ENCODE measurements at regions of chr2 and their contacts with region 1.

Region 1: DNA sequence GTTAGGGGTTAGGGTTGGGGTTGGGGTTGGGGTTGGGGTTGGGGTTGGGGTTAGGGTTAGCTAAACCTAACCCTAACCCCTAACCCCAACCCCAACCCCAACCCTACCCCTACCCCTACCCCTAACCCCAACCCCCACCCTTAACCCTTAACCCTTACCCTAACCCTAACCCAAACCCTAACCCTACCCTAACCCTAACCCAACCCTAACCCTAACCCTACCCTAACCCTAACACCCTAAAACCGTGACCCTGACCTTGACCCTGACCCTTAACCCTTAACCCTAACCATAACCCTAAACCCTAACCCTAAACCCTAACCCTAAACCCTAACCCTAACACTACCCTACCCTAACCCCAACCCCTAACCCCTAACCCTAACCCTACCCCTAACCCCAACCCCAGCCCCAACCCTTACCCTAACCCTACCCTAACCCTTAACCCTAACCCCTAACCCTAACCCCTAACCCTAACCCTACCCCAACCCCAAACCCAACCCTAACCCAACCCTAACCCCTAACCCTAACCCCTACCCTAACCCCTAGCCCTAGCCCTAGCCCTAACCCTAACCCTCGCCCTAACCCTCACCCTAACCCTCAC is 24.1 kb upstream of the RABL2A start:
- DNase-seq: no peak
- H3K4me3 ChIP-seq: peak overlapping the region in 1 of 2 donors; percentile 43
- H3K4me3 Mint-ChIP-seq: peak overlapping the region; percentile 86 to 99 (median 92)
- H3K27ac ChIP-seq: peak overlapping the region; percentile 47
- H3K27ac Mint-ChIP-seq: peak overlapping the region; percentile 84 to 99 (median 95)
- H3K4me1 ChIP-seq: peaks cover 5% of the 10 kb centered on the region
- H3K4me1 Mint-ChIP-seq: peaks cover 4 to 14% (median 8%) of the 10 kb centered on the region in 4 donors
- H3K27me3 ChIP-seq: no peaks in the 10 kb centered on the region
- H3K27me3 Mint-ChIP-seq: peaks cover 0 to 4% of the 10 kb centered on the region in 2 donors

Region 2: DNA sequence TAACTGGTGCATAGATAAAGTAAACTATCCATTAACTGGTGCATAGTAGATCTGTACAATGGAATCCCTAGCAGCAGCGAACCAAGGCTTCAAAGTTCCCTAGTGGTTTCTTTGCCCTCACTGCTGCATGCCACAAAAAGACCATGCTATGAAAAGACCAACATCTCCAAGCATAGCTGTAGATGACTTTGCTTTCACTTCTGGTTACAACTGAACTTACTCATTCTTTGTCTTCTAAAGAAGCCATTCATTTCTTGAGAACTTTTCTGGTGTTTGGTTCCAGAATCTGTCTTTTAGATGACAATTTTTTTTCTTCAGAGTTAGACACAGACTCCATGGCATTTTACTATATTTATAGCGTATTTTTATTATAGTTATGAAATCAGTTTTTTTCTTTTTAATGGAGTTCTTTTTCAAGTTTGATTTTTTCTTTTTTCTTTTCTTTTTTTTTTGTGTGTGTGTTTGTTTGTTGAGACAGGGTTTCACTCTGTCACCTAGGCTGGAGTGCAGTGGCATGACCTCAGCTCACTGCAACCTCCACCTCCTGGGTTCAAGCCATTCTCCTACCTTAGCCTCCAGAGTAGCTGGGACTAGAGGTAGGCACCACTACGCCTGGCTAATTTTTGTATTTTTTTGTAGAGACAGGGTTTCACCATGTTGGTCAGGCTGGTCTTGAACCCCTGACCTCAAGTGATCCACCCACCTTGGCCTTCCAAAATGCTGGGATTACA is 89.9 kb after region 1 on chr2:
- CTCF ChIA-PET with region 1: interaction called, 4 read pairs
- POLR2A ChIA-PET with region 1: interaction called, 4 read pairs
- intact Hi-C with region 1: loop called (anchors 10 kb)
- DNase-seq: peak in 3 of 5 donors; percentile 13 to 22 (median 14)
- H3K4me3 ChIP-seq: no peak overlapping the region
- H3K4me3 Mint-ChIP-seq: peak overlapping the region; percentile 66 to 90 (median 82)
- H3K27ac ChIP-seq: no peak overlapping the region
- H3K27ac Mint-ChIP-seq: peak overlapping the region; percentile 76 to 90 (median 83)
- H3K4me1 ChIP-seq: peaks cover 25% of the 10 kb centered on the region
- H3K4me1 Mint-ChIP-seq: peaks cover 15 to 26% (median 20%) of the 10 kb centered on the region in 4 donors
- H3K27me3 ChIP-seq: no peaks in the 10 kb centered on the region
- H3K27me3 Mint-ChIP-seq: no peaks in the 10 kb centered on the region

Region 3: DNA sequence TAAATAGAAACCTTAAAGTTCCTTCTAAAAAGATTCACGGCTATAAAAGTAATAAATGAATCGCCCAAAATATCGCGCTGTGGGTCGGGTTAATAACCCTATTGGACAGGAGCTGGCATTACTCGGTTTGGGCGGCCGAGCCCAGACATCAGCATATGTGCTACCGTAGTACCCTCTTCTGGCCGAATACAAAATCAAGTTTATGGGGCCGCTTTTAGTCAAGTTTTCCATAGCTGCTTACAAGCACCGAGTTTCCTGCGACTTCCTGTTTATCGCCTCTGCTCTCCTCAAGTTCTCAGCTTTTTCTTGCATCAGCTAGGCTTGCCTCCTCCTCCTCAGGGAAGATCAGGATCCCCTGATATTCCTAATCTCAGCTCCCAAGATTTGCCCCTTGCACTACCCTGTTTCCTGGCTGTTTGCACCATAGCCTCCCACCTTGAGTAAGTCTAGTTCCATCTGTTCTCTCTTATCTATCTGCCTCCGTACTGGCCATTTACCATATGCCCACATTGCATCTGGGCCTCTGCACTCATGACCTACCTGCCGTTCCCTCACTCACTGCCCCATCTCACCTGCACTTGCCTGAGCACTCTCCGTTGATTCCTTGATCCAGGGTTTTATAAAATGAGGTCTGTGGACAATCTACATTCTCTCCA is 97.3 kb after region 1 on chr2:
- CTCF ChIA-PET with region 1: interaction called, 14 read pairs
- POLR2A ChIA-PET with region 1: interaction called, 4 read pairs
- intact Hi-C with region 1: loop called (anchors 10 kb)
- DNase-seq: peak; percentile 22 to 47 (median 30)
- H3K4me3 ChIP-seq: peak overlapping the region in 1 of 2 donors; percentile 34
- H3K4me3 Mint-ChIP-seq: peak overlapping the region; percentile 51 to 83 (median 76)
- H3K27ac ChIP-seq: no peak overlapping the region
- H3K27ac Mint-ChIP-seq: peak overlapping the region in 4 of 7 donors; percentile 18 to 85 (median 66)
- H3K4me1 ChIP-seq: peaks cover 20% of the 10 kb centered on the region
- H3K4me1 Mint-ChIP-seq: peaks cover 11 to 22% (median 18%) of the 10 kb centered on the region in 4 donors
- H3K27me3 ChIP-seq: no peaks in the 10 kb centered on the region
- H3K27me3 Mint-ChIP-seq: no peaks in the 10 kb centered on the region

Measured in CD4-positive, alpha-beta memory T cell (primary cell).